Activated CD4-positive, alpha-beta memory T cell treated with anti-CD3 and anti-CD28 coated beads for 36 hours (primary cell): ENCODE measurements at regions of chr3 and their contacts with region 1.

Region 1: DNA sequence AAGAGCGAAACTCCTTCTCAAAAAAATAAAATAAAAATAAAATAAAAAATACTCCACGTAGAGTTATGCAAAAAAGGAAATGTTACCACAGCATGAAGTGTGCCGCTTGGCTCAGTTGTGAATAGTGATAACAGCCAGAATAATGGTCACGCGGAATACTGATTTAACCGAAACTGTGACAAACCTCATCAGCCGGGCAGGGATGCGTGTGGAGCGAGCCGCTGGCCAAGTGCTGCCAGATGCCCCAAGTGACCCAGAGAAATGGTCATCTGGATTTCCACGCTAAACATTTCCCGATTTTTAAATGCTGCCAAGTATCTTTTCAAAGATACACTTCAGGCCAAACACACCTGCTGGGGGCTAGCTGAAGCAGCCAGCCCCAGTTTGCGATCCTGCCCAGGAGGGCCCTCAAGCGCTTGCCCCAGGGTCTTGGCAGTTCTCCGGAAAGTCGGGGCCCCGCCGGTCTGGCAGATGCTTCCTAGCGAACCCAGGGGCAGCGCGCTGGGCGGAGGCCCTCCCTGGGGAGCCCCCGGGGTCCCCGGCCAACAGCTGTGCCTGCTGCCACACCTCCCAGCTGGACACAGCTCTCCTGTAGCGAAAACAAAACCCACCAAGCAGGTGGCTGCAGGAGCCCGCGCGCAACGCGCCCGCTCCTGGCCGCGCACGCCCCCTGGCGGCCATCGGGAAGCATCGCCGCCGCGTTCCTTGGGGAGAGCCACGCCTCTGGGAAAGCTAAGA is 35.1 kb downstream of the CMTM6 start:
- DNase-seq: peak; percentile 82
- H3K4me3 Mint-ChIP-seq: peak overlapping the region; percentile 4
- H3K27ac Mint-ChIP-seq: no peak overlapping the region
- H3K4me1 Mint-ChIP-seq: peaks cover 40% of the 10 kb centered on the region
- H3K27me3 Mint-ChIP-seq: no peaks in the 10 kb centered on the region

Region 2: DNA sequence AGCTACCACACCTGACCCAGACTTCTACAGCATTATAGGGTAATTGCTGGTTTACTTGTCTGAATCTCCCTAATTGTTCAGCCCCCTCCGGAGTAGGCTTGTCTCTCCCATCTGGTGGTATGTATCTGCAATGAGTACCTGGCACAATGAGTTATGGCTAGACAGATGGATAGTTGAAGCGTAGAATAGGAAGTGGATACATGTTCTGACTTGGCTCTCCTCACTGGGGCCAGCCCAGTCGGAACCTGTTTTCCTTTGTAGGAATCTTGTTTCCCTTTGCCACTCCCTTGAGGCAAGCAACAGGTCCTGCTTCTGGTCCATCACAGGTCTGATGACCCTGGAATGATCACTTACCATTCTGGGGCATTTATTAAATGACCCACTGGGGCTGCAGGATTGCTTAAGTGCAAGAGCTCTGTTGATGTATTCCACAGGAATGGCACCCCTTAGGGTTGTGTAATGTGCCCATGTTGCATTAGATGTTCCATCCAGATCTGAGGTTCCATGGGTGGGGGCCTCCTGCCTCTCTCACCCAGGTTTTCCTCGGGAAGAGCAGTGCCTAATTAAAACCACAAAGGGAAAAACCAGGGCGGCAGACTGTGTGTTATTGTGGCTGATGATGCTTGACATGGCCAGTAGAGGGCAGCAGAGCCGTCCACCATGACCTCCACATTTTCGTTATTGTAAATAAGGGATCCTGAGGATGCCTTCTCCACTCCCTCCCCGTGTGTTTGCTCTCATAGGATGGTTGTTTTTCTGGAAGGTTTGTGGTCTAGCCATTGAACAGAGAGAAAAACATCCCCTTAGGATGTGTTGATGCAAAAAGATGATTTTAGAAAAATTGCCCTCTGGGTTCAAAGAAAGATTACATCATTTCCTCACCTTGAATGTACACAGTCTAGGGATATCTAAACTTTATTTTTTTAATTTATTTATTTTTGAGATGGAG is 171.0 kb before region 1 on chr3:
- CTCF ChIA-PET with region 1: interaction called, 16 read pairs
- POLR2A ChIA-PET with region 1: no interaction called
- intact Hi-C with region 1: loop called (anchors 5 kb)
- DNase-seq: peak; percentile 76
- H3K4me3 Mint-ChIP-seq: peak overlapping the region; percentile 44
- H3K27ac Mint-ChIP-seq: peak overlapping the region; percentile 63
- H3K4me1 Mint-ChIP-seq: peaks cover 39% of the 10 kb centered on the region
- H3K27me3 Mint-ChIP-seq: no peaks in the 10 kb centered on the region

Region 3: DNA sequence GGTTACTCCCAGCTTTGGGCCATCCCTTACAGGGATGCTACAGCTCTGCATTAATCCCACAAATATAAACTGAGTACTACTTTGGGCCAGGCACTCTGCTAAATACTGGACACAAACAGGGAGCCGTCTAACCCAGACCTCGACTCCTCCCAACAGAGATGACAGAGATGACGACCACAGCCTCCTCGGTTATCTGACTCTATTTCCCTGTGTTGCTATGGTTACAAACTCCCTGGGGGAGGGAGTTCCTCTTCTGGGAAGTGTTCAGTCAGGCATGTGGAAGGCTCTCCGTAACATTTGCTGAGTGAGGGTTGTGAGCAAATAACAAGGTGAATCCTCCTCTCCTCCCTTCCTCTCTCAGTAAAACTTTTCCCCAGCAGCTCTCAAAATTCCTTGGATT is 82.6 kb before region 1 on chr3:
- CTCF ChIA-PET with region 1: interaction called, 12 read pairs
- POLR2A ChIA-PET with region 1: no interaction called
- intact Hi-C with region 1: no loop called
- DNase-seq: no peak
- H3K4me3 Mint-ChIP-seq: no peak overlapping the region
- H3K27ac Mint-ChIP-seq: no peak overlapping the region
- H3K4me1 Mint-ChIP-seq: peaks cover 11% of the 10 kb centered on the region
- H3K27me3 Mint-ChIP-seq: no peaks in the 10 kb centered on the region

Region 4: DNA sequence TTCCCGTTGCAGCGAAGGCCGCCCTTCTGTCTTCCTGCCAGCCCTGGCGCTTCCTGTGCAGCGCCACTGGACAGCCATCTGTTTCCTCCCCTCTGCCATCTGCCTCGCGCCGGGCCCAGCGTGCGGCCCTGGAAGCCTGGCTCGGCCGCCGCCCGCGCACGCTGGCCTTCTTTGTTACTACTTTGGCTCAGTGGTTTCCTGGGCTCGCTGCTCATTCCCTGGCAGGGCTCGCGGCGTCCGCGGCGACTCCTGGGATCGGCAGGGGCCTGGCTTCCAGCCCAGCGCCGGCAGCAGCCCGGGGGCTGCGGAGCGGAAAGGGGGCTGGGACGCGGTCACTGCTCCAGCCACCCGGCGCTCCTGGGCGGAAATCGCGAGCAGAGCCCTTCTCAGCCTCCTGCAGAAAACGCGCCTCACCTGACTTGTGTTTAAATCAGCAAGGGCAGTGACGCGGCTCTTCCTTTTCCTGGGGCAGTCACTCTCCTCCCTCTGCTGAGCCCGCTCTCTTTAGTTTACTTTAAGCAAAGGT is 65.9 kb before region 1 on chr3:
- CTCF ChIA-PET with region 1: interaction called, 33 read pairs
- POLR2A ChIA-PET with region 1: interaction called, 3 read pairs
- intact Hi-C with region 1: loop called (anchors 2 kb)
- DNase-seq: peak; percentile 74
- H3K4me3 Mint-ChIP-seq: peak overlapping the region; percentile 85
- H3K27ac Mint-ChIP-seq: peak overlapping the region; percentile 99
- H3K4me1 Mint-ChIP-seq: peaks cover 58% of the 10 kb centered on the region
- H3K27me3 Mint-ChIP-seq: no peaks in the 10 kb centered on the region

Region 5: DNA sequence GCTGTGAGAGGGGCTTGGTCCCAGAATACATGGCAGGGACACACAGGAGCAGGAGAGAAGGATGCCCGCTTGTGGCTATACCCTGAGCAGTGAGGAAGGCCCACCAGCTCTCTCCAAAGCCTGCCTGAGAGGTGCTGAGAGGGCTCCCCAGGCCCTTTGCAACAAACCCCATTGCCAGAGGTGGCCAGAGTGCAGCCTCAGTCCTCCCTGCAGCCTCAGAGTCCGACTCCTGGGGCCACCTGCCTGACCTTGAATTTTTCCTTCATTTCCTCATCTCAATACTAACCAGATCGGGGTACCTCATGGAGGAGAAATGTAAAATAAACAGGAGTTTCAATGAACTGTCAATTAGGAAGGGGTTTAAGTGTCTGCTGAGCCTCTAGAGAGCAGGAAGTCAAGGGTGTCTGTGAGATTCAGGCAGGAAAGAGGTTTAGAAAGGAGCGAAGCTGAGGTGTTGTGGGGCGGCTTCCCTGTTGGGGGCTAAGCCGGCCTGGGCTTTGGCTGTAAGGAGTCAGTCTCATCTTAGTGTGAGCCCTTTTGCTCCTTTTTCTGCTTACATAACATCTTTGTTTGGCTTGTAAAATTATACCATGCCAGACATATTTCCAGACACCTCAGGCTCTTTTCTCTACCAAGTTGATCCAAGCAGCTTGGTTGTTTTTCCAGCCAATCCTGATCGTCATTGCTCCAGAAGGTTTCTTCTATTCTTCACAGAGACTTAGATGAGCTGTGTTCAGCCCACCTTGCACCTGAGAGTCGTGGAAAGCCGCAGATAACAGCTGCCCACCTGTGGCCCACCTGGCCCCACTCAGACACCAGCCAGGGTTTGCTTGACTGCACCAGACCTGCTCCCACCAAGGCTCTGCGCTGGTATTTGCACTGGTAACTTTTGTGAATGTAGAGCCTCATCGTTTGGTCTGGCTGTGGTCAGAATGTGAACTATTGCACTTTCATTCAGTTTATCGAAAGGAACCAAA is 39.1 kb before region 1 on chr3:
- CTCF ChIA-PET with region 1: interaction called, 28 read pairs
- POLR2A ChIA-PET with region 1: no interaction called
- intact Hi-C with region 1: no loop called
- DNase-seq: peak; percentile 41
- H3K4me3 Mint-ChIP-seq: peak overlapping the region; percentile 57
- H3K27ac Mint-ChIP-seq: peak overlapping the region; percentile 84
- H3K4me1 Mint-ChIP-seq: peaks cover 93% of the 10 kb centered on the region
- H3K27me3 Mint-ChIP-seq: no peaks in the 10 kb centered on the region

Region 6: DNA sequence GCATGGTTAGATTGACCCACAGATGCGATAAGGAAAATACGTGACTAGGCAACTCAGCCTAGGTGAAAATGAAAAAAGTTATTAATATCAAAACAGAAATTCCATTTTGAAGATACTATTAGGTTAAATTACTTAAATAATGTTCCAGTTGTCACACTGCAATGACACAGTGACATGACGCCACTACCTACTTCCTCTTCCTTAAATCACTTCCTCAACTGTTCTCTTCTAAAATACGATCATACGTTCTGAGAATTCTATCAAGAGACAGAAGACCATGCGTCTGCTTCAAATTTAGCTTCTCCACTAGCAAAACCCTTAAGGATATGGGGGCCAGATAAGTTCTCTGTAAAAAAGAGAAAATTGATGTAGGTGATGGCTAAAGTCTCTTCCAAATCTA is 16.9 kb after region 1 on chr3:
- CTCF ChIA-PET with region 1: interaction called, 17 read pairs
- POLR2A ChIA-PET with region 1: interaction called, 3 read pairs
- intact Hi-C with region 1: no loop called
- DNase-seq: no peak
- H3K4me3 Mint-ChIP-seq: no peak overlapping the region
- H3K27ac Mint-ChIP-seq: no peak overlapping the region
- H3K4me1 Mint-ChIP-seq: peaks cover 26% of the 10 kb centered on the region
- H3K27me3 Mint-ChIP-seq: no peaks in the 10 kb centered on the region

Region 7: GRCh38 chr3:32502118-32502945 is 34.8 kb after region 1 on chr3 and contains the start of gene CMTM6:
- CTCF ChIA-PET with region 1: interaction called, 5 read pairs
- POLR2A ChIA-PET with region 1: no interaction called
- intact Hi-C with region 1: loop called (anchors 5 kb)
- DNase-seq: peak; percentile 84
- H3K4me3 Mint-ChIP-seq: peak within 1 kb of the TSS; percentile 100
- H3K27ac Mint-ChIP-seq: peak within 1 kb of the TSS; percentile 97
- H3K4me1 Mint-ChIP-seq: peaks cover 32% of the 10 kb centered on the region
- H3K27me3 Mint-ChIP-seq: no peaks in the 10 kb centered on the region
- total RNA-seq, gene CMTM6: 87.7 to 89.1 TPM

Region 8: DNA sequence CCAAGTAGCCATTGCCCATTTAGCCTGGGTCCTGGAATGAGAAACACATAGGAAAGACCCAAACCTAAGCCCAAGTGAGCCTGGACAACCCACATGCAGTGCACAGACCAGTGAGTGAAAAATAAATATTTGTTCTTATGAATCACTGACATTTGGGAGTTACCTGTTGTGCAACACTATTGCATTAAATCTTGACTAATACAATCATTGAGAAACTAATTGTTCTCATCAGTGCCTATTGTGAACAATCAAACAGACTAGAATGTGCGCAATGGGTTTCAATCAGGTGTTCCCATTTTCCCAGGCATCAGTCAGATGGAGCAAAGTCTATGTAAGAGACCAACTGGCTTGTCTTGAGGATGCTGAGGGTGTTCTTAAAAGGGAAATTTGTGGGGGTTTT is 162.8 kb after region 1 on chr3:
- CTCF ChIA-PET with region 1: no interaction called
- POLR2A ChIA-PET with region 1: no interaction called
- intact Hi-C with region 1: no loop called
- DNase-seq: no peak
- H3K4me3 Mint-ChIP-seq: no peak overlapping the region
- H3K27ac Mint-ChIP-seq: no peak overlapping the region
- H3K4me1 Mint-ChIP-seq: no peaks in the 10 kb centered on the region
- H3K27me3 Mint-ChIP-seq: peaks cover 2% of the 10 kb centered on the region

Region 9: DNA sequence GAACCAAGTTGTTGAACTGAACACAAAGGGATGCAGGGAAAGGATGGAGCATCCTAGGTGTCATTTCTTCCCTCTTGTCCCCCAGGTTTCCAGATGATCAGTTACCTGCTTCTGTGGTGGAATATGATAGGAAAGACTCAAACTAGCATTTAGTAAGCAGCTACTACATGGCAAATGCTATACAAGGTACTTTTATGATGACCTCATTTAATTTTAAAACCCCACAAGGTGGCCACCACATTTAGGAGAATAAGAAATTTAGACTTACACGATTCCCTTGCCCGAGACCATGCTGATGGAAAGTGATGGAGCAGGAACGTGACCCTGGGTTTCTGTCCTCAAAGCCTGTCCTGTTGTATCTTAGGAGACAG is 524.8 kb after region 1 on chr3:
- CTCF ChIA-PET with region 1: no interaction called
- POLR2A ChIA-PET with region 1: no interaction called
- intact Hi-C with region 1: no loop called
- DNase-seq: no peak
- H3K4me3 Mint-ChIP-seq: peak overlapping the region; percentile 73
- H3K27ac Mint-ChIP-seq: peak overlapping the region; percentile 92
- H3K4me1 Mint-ChIP-seq: peaks cover 87% of the 10 kb centered on the region
- H3K27me3 Mint-ChIP-seq: no peaks in the 10 kb centered on the region